GM13977 (cell line): ENCODE measurements at regions of chr20 and their contacts with region 1.

Region 1: GRCh38 chr20:21529863-21530262 is 16.0 kb upstream of the NKX2-2 start:
- DNase-seq: peak; percentile 56
- CTCF ChIP-seq: peak; percentile 44

Region 2: DNA sequence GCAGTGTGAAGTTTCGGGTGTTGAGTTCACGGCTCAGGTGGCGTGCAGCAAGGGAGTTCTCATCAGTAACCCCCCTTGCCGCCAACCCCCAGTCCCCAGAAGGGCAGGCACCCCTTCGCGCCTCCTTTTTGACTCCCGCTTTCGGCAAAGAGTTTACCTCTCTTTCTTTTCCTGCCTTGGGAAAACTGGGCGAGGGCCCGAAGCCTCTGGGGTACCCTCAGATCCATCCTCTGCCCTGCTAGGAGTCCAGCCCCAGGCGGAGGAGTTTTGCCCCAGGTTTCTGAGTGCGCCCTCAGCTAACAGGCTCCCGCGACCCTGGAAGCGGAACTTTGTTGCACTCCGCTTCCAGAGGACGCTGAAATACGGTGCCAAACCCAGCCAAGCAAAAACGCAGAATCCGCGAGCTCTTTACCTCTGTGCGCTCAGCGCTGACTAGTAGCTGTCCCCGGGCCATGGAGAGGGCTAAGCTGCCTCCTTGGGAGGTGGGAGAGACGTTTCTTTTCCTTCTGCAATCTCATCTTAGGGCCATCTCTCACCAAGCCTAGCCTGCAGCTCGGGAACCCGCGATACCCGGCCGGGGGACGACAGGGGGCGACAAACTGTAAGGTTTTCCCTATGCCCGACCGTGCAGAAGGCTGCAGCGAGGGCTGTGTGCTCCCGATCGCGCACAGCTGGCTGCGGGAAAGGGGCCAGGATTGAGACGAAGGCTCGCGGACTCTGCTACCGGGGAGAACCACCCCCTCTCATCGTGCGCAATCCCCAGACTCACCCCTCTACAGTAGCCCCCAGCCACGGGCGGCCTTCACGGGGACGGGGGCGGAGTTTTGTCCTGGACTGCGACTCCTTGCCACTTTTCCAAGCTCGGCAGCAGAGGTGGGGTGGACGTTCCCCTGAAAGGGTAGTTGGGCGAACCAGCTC is 172.9 kb after region 1 on chr20:
- in situ Hi-C with region 1: loop called (anchors 10 kb)
- DNase-seq: no peak
- CTCF ChIP-seq: peak; percentile 41

Region 3: DNA sequence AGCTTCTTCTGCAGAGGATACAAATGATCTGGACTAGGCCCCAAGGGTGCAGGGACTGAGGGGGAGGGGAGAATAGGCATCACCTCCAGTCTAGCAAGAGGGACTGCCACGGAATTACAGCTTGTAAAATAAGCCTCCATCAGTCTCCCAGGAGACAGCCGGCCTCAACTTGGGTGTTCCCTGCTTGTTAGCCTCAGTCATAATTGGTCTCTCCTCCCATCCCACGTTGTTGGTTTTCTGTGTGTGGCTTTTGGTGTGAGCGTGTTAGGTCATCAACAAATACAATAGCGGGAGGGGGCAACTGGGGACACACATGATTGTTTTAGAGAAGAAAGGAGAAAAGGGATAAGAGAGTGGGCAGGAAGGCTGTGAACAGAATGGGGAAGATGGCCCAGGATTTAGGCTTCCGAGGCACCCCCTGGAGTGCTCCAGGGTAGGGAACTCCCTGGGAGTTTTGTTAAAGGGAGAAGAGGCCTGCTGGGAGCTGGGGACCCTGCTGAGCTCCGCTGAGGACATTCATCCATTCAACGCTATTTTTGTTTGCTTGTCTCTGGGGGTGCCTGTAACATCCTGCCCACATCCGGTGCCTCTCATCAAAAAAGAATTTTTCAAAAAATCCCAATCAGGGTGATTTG is 1045.3 kb after region 1 on chr20:
- in situ Hi-C with region 1: loop called (anchors 10 kb)
- DNase-seq: no peak
- CTCF ChIP-seq: no peak